SK-N-SH (cell line): ENCODE measurements at regions of chr17 and their contacts with region 1.

Region 1: GRCh38 chr17:1055751-1056645 is 59.1 kb downstream of the TIMM22 start:
- DNase-seq: peak; percentile 90
- H3K4me3 ChIP-seq: no peak overlapping the region; a peak in 1 of 4 replicates
- H3K27ac ChIP-seq: no peak overlapping the region
- H3K4me1 ChIP-seq: no peaks in the 10 kb centered on the region; a peak in 1 of 4 replicates
- H3K27me3 ChIP-seq: no peaks in the 10 kb centered on the region
- CTCF ChIP-seq: peak; percentile 71
- EP300 ChIP-seq: no peak
- RAD21 ChIP-seq: peak; percentile 76

Region 2: DNA sequence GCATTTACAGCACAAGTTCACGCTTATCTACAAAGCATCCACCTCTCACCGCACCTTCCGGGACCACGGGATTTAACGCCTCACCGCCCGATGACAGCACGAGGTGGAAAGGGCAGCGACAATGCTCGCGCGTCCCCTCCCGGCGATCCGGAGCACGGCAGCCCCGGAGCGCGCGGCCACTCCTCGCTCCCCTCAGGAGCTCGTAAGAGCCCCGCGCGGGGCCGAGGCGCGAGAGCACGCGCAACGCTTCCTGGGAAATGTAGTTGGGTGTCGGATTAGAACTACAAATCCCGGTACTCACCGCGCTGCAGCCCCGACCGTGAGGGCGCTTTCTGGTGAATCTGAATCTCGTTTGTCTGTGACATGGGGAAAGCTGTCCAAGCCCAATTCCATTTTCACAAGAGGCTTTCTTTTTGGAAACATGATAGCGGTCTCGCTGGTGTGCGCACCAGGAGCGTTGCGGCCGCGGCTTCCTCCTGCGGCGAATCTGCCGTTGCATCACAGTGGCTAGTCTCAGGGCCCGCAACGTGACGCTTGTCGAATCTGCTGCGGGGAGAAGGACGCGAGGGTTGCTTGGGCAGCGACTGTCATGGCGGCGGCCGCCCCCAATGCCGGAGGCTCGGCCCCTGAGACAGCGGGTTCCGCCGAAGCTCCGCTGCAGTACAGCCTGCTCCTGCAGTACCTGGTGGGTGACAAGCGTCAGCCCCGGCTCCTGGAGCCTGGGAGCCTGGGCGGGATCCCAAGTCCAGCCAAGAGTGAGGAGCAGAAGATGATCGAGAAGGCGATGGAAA is 59.2 kb before region 1 on chr17 and contains the start of gene TIMM22:
- CTCF ChIA-PET with region 1: interaction called, 66 read pairs
- POLR2A ChIA-PET with region 1: no interaction called
- DNase-seq: peak; percentile 96
- H3K4me3 ChIP-seq: peak within 1 kb of the TSS; percentile 68 to 99
- H3K27ac ChIP-seq: peak within 1 kb of the TSS; percentile 87 to 92
- H3K4me1 ChIP-seq: peaks cover 12 to 15% of the 10 kb centered on the region in 2 experiments; a peak in 3 of 4 replicates
- H3K27me3 ChIP-seq: no peaks in the 10 kb centered on the region
- CTCF ChIP-seq: peak; percentile 88
- EP300 ChIP-seq: peak; percentile 88 to 95
- RAD21 ChIP-seq: peak; percentile 77
- polyA plus RNA-seq, gene TIMM22: 9.9 and 10.7 TPM in 2 replicates

Region 3: GRCh38 chr17:1031711-1032110 is 24.3 kb before region 1 on chr17:
- CTCF ChIA-PET with region 1: interaction called, 41 read pairs
- POLR2A ChIA-PET with region 1: no interaction called
- DNase-seq: peak; percentile 86
- H3K4me3 ChIP-seq: no peak overlapping the region
- H3K27ac ChIP-seq: no peak overlapping the region
- H3K4me1 ChIP-seq: peaks cover 0 to 27% of the 10 kb centered on the region in 2 experiments; a peak in 1 of 4 replicates
- H3K27me3 ChIP-seq: no peaks in the 10 kb centered on the region
- CTCF ChIP-seq: no peak
- EP300 ChIP-seq: no peak
- RAD21 ChIP-seq: no peak

Region 4: GRCh38 chr17:1077986-1078711 is 22.2 kb after region 1 on chr17:
- CTCF ChIA-PET with region 1: interaction called, 13 read pairs
- POLR2A ChIA-PET with region 1: no interaction called
- DNase-seq: peak; percentile 58
- H3K4me3 ChIP-seq: peak overlapping the region in 1 of 2 experiments; percentile 32; a peak in 2 of 4 replicates
- H3K27ac ChIP-seq: peak overlapping the region in 1 of 2 experiments; percentile 53; a peak in 2 of 4 replicates
- H3K4me1 ChIP-seq: peaks cover 25 to 30% of the 10 kb centered on the region in 2 experiments; a peak in 3 of 4 replicates
- H3K27me3 ChIP-seq: no peaks in the 10 kb centered on the region
- CTCF ChIP-seq: no peak
- EP300 ChIP-seq: no peak
- RAD21 ChIP-seq: no peak